Right cardiac atrium (tissue), 5 donors: ENCODE measurements at regions of chr15 and their contacts with region 1.

Region 1: GRCh38 chr15:63332367-63333124 is 49.1 kb downstream of the CA12 start:
- DNase-seq: no peak
- ATAC-seq: no peak
- H3K4me3 ChIP-seq: no peak overlapping the region
- H3K27ac ChIP-seq: no peak overlapping the region
- H3K4me1 ChIP-seq: peaks cover 4% of the 10 kb centered on the region
- H3K27me3 ChIP-seq: no peaks in the 10 kb centered on the region

Region 2: GRCh38 chr15:63389902-63390670 is 57.5 kb after region 1 on chr15:
- intact Hi-C with region 1: loop called in 1 of 4 experiments (anchors 10 kb)
- DNase-seq: peak in 1 of 3 donors; percentile 73
- ATAC-seq: no peak
- H3K4me3 ChIP-seq: no peak overlapping the region
- H3K27ac ChIP-seq: no peak overlapping the region
- H3K4me1 ChIP-seq: no peaks in the 10 kb centered on the region
- H3K27me3 ChIP-seq: no peaks in the 10 kb centered on the region